ENCODE measurements at regions of chr19 and their contacts with region 1.

Region 1: GRCh38 chr19:49506575-49507105 is 5.8 kb upstream of the FCGRT start:
- DNase-seq: peak; percentile 55 to 77 (median 68)
- H3K4me3 ChIP-seq: no peak overlapping the region
- H3K27ac ChIP-seq: no peak overlapping the region
- H3K4me1 ChIP-seq: peaks cover 0 to 4% of the 10 kb centered on the region in 2 donors
- H3K27me3 ChIP-seq: no peaks in the 10 kb centered on the region
- CTCF ChIP-seq: peak; percentile 48 to 82 (median 75)
- POLR2A ChIP-seq: no peak

Region 2: DNA sequence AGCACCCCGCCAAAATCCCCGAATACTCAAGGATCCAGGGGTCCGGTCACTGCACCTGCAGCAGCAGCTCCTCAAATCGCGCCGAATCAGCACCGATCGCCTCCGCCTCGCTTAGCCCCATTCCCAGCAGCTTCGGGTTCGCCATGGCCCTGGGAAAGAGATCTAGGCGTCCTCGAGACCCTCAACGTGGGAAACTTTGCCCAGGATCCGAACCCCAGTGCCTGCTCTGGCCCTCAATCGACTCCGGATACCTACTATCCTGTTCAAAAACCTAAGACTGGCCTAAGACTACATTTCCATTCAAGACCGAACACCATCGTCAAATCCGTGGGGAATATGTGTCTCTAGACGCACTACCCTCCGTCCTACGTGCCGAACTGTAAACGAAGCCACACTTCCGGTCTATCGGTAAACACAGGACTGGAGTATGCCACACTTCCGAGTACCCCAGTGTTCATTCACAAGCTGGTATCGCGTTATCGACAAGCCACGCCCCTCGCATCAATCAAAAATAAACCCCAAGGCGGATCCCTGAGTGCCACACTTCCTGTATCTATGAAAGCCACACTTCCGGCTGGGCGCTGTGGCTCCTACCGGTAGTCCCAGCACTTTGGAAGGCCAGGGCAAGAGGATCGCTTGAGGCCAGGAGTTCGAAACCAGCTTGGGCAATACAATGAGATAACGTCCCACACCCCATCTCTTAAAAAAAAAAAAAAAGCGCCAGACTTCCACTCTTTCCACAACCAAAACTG is 55.0 kb before region 1 on chr19 and contains the start of gene PIH1D1:
- intact Hi-C with region 1: no loop called
- DNase-seq: peak; percentile 97 to 100 (median 99)
- H3K4me3 ChIP-seq: peak within 1 kb of the TSS; percentile 37 to 93 (median 61)
- H3K27ac ChIP-seq: peak within 1 kb of the TSS; percentile 42 to 97 (median 91)
- H3K4me1 ChIP-seq: peaks cover 3 to 19% of the 10 kb centered on the region in 2 donors
- H3K27me3 ChIP-seq: no peaks in the 10 kb centered on the region
- CTCF ChIP-seq: peak in 3 of 6 experiments; percentile 15 to 34 (median 25)
- POLR2A ChIP-seq: peak in 1 of 2 donors; percentile 66
- total RNA-seq, gene PIH1D1: 63.1 to 131 (median 87.2) TPM

Region 3: GRCh38 chr19:49544154-49544553 is 37.5 kb after region 1 on chr19:
- intact Hi-C with region 1: loop called (anchors 5 kb)
- DNase-seq: no peak
- H3K4me3 ChIP-seq: no peak overlapping the region
- H3K27ac ChIP-seq: no peak overlapping the region
- H3K4me1 ChIP-seq: no peaks in the 10 kb centered on the region
- H3K27me3 ChIP-seq: no peaks in the 10 kb centered on the region
- CTCF ChIP-seq: no peak
- POLR2A ChIP-seq: no peak

Region 4: GRCh38 chr19:49551531-49551930 is 44.9 kb after region 1 on chr19:
- intact Hi-C with region 1: loop called in 1 of 2 experiments (anchors 2 kb)
- DNase-seq: no peak
- H3K4me3 ChIP-seq: no peak overlapping the region
- H3K27ac ChIP-seq: peak overlapping the region in 1 of 5 donors; percentile 21
- H3K4me1 ChIP-seq: peaks cover 4 to 10% of the 10 kb centered on the region in 2 donors
- H3K27me3 ChIP-seq: no peaks in the 10 kb centered on the region
- CTCF ChIP-seq: no peak
- POLR2A ChIP-seq: no peak

Region 5: DNA sequence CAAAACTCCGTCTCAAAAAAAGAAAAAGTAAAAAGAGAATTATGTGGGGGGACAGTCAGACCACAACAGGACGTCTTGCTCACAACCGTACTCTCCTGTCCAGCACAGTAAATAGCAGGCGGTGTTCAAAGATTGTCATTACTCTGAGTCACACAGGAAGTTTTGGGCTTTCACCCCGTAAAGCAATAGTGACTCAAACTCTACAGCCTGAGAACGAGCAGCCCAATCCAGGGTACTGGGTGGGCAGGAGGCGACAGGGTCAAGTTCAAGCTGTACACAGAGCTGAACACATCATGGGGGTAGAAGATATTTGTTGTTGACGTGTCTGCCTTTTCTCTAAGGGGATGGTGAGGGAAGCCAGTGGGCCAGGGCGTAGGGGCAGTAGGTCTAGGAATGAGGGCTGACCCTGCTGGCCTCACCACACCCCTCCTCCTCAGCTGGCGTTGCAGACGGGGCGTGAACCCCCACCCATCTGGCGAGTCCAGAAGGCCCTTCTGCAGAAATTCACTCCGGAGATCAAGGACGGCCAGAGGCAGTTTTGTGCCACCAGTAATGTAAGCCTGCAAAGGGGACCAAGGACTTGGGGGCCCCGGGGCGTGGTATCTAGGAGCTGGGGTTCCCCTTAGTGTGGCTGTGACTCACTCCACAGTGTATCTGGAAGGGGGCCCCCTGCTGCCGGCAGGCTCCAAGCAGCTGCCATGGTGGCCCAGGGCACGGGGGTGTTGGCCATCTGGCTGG is 107.6 kb after region 1 on chr19:
- intact Hi-C with region 1: no loop called
- DNase-seq: peak in 4 of 7 donors; percentile 46 to 62 (median 54)
- H3K4me3 ChIP-seq: no peak overlapping the region
- H3K27ac ChIP-seq: peak overlapping the region in 3 of 5 donors; percentile 49 to 71 (median 69)
- H3K4me1 ChIP-seq: peaks cover 14 to 19% of the 10 kb centered on the region in 2 donors
- H3K27me3 ChIP-seq: no peaks in the 10 kb centered on the region
- CTCF ChIP-seq: no peak
- POLR2A ChIP-seq: no peak